ENCODE measurements at regions of chr12 and their contacts with region 1.

Region 1: GRCh38 chr12:125183187-125184067 is 118.2 kb downstream of the AACS start:
- DNase-seq: peak; percentile 48 to 77 (median 56)
- H3K4me3 ChIP-seq: no peak overlapping the region
- H3K4me3 Mint-ChIP-seq: peak overlapping the region in 2 of 7 donors; percentile 18 to 27
- H3K27ac ChIP-seq: no peak overlapping the region
- H3K27ac Mint-ChIP-seq: peak overlapping the region in 2 of 8 donors; percentile 14 to 41
- H3K4me1 ChIP-seq: peaks cover 7% of the 10 kb centered on the region
- H3K4me1 Mint-ChIP-seq: peaks cover 8 to 19% (median 10%) of the 10 kb centered on the region in 3 donors
- H3K27me3 ChIP-seq: peaks cover 24% of the 10 kb centered on the region
- H3K27me3 Mint-ChIP-seq: peaks cover 44 to 63% of the 10 kb centered on the region in 2 donors

Region 2: DNA sequence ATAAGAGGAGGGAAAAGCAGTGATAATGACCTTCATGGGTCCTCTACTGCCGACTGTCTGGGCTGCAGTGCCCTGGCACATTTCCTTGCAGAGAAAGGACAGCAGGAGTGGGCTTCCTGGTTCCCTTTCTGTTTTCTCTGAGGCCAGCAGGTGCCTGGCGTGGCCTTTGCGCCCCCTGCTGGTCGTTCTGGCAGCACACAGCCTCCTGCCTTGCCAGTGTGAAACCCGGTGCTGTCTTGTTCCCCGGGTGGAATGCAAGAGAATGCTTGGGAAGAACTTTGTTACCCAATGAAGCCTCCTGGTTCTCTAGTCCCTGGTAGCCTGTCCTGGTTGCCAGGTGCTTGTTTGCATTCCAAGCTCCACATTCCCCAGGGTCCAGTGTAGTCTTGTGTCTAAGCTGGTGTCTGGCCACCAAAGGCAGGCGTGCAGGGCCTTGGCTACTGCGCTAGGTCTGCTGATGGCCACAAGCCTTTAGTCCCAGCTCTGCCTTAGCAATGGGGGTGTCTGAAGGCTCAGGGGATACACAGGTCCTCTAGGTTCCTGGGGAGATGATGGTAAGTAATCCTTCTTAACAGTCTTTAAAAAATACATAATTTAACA is 1691.1 kb after region 1 on chr12:
- CTCF ChIA-PET with region 1: interaction called, 17 read pairs
- POLR2A ChIA-PET with region 1: no interaction called
- DNase-seq: peak; percentile 12 to 71 (median 55)
- H3K4me3 ChIP-seq: no peak overlapping the region
- H3K4me3 Mint-ChIP-seq: no peak overlapping the region
- H3K27ac ChIP-seq: no peak overlapping the region
- H3K27ac Mint-ChIP-seq: peak overlapping the region in 1 of 8 donors; percentile 39
- H3K4me1 ChIP-seq: no peaks in the 10 kb centered on the region
- H3K4me1 Mint-ChIP-seq: peaks cover 4 to 6% (median 4%) of the 10 kb centered on the region in 3 donors
- H3K27me3 ChIP-seq: no peaks in the 10 kb centered on the region
- H3K27me3 Mint-ChIP-seq: peaks cover 3 to 4% of the 10 kb centered on the region in 2 donors